Panc1 (cell line): ENCODE measurements at regions of chr9 and their contacts with region 1.

Region 1: DNA sequence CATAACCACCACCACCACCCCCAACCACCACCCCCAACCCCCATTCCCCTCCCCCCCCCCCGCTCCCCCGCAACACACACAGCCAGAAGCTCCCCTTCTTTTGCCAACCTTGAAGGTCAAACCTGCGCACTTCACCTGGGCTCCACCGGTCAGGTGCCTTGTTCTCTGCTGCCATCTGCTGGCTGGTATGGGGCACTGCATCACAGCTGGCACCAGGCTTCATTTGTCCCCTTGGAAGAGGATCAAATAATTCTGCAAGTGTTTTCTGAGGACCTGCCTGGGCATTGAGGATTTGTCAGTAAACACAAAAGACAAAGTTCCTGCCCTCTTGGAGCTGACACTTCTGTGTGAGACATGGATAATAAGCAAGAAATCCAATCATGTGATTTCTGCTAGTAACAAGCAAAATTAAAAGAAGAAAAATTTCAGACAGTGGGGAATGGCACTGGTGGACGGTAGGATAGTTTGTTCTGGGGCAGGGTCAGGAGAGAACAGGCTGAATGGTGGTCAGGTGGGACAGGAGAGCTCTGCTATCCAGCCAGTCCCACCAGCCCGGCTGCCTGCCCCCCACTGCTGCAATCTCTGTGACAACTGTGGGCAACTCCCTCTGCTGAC is 55.6 kb upstream of the LMX1B start:
- DNase-seq: peak; percentile 53
- ATAC-seq: peak; percentile 85
- H3K4me3 ChIP-seq: no peak overlapping the region
- H3K27ac ChIP-seq: no peak overlapping the region
- H3K4me1 ChIP-seq: no peaks in the 10 kb centered on the region
- H3K27me3 ChIP-seq: peaks cover 14% of the 10 kb centered on the region
- CTCF ChIP-seq: peak; percentile 87

Region 2: GRCh38 chr9:126463426-126463825 is 94.7 kb before region 1 on chr9:
- CTCF ChIA-PET with region 1: interaction called, 3 read pairs
- POLR2A ChIA-PET with region 1: interaction called, 12 read pairs
- in situ Hi-C with region 1: no loop called
- intact Hi-C with region 1: no loop called
- DNase-seq: no peak
- ATAC-seq: no peak
- H3K4me3 ChIP-seq: no peak overlapping the region
- H3K27ac ChIP-seq: no peak overlapping the region
- H3K4me1 ChIP-seq: no peaks in the 10 kb centered on the region
- H3K27me3 ChIP-seq: no peaks in the 10 kb centered on the region
- CTCF ChIP-seq: no peak